ENCODE measurements at regions of chr15 and their contacts with region 1.

Region 1: GRCh38 chr15:78108299-78109084 is 16.1 kb downstream of the SH2D7 start:
- DNase-seq: peak; percentile 82 to 85 (median 82)
- H3K4me3 ChIP-seq: no peak overlapping the region
- H3K4me3 Mint-ChIP-seq: no peak overlapping the region
- H3K27ac ChIP-seq: no peak overlapping the region
- H3K27ac Mint-ChIP-seq: peak overlapping the region in 3 of 7 donors; percentile 24 to 62 (median 46)
- H3K4me1 ChIP-seq: peaks cover 34% of the 10 kb centered on the region
- H3K4me1 Mint-ChIP-seq: peaks cover 27 to 41% (median 31%) of the 10 kb centered on the region in 4 donors
- H3K27me3 ChIP-seq: no peaks in the 10 kb centered on the region
- H3K27me3 Mint-ChIP-seq: no peaks in the 10 kb centered on the region

Region 2: DNA sequence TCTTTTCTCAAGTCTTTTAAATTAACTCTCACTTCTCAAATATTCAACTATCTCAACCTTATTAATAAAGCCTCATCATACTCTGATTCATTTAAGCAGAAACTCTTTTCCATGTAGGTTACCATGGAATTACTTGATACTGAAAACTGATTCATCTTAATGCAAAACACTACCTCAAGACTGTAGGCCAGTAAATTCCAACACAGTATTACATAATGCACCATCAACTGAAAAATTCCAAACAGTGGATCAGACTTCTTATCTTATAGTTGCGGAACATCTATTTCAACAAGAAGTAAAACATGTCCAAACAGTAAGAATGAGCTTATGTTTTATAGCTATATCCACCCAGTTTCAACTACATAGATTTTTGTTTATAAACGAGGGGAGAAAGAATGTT is 813.0 kb before region 1 on chr15:
- CTCF ChIA-PET with region 1: no interaction called
- POLR2A ChIA-PET with region 1: no interaction called
- intact Hi-C with region 1: no loop called
- DNase-seq: no peak
- H3K4me3 ChIP-seq: no peak overlapping the region
- H3K4me3 Mint-ChIP-seq: no peak overlapping the region
- H3K27ac ChIP-seq: no peak overlapping the region
- H3K27ac Mint-ChIP-seq: no peak overlapping the region
- H3K4me1 ChIP-seq: no peaks in the 10 kb centered on the region
- H3K4me1 Mint-ChIP-seq: no peaks in the 10 kb centered on the region
- H3K27me3 ChIP-seq: no peaks in the 10 kb centered on the region
- H3K27me3 Mint-ChIP-seq: no peaks in the 10 kb centered on the region

Region 3: GRCh38 chr15:77959432-77959879 is 149.0 kb before region 1 on chr15:
- CTCF ChIA-PET with region 1: interaction called, 236 read pairs
- POLR2A ChIA-PET with region 1: interaction called, 8 read pairs
- intact Hi-C with region 1: loop called (anchors 1 kb)
- DNase-seq: peak; percentile 60 to 71 (median 67)
- H3K4me3 ChIP-seq: no peak overlapping the region
- H3K4me3 Mint-ChIP-seq: peak overlapping the region in 1 of 8 donors; percentile 56
- H3K27ac ChIP-seq: no peak overlapping the region
- H3K27ac Mint-ChIP-seq: no peak overlapping the region
- H3K4me1 ChIP-seq: no peaks in the 10 kb centered on the region
- H3K4me1 Mint-ChIP-seq: peaks cover 1 to 8% (median 6%) of the 10 kb centered on the region in 4 donors
- H3K27me3 ChIP-seq: no peaks in the 10 kb centered on the region
- H3K27me3 Mint-ChIP-seq: peaks cover 0 to 2% of the 10 kb centered on the region in 2 donors

Region 4: DNA sequence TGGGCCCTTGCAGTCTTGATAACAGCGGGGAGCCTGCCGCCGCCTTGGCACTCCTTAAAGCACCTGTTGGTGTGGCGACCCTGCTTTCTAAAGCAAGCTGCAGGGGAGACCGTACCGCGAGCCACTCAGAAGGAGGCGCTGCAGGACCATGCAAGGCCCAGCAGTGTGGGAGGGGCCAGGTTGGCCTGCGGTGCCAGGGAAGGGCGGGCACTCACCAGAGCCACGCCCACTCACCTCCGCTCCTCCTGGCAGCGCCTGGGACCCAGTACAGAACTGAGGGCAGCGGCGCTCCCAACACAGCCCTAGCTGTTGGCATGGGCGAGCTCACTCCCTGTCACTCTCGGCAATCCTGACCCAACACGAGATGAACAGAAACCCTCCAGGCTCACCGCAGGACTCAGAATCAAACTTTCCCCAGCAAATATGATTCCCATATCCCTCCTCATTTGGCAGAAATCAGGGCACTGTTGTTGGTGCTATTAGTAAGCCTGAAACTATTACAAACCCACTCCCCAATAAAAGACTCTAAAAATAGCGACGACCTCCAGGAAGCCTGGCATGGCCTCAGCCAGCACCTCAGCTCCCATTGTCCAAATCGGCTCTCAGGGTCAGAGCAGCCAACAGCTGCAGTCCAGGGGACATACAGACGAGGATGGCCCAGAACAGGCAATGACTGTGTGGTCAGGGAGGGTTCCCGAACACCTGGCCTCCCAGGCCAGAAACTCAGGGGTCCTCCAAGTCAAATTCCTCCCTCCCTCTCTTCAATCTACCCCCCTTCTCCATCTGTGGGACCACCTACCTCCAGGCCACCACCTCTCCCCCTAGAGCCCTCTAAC is 108.2 kb before region 1 on chr15:
- CTCF ChIA-PET with region 1: interaction called, 172 read pairs
- POLR2A ChIA-PET with region 1: interaction called, 21 read pairs
- intact Hi-C with region 1: loop called (anchors 1 kb)
- DNase-seq: peak; percentile 79 to 82 (median 80)
- H3K4me3 ChIP-seq: no peak overlapping the region
- H3K4me3 Mint-ChIP-seq: no peak overlapping the region
- H3K27ac ChIP-seq: no peak overlapping the region
- H3K27ac Mint-ChIP-seq: peak overlapping the region; percentile 49 to 93 (median 66)
- H3K4me1 ChIP-seq: no peaks in the 10 kb centered on the region
- H3K4me1 Mint-ChIP-seq: peaks cover 7 to 18% (median 10%) of the 10 kb centered on the region in 4 donors
- H3K27me3 ChIP-seq: no peaks in the 10 kb centered on the region
- H3K27me3 Mint-ChIP-seq: no peaks in the 10 kb centered on the region

Region 5: GRCh38 chr15:78049691-78050440 is 58.6 kb before region 1 on chr15:
- CTCF ChIA-PET with region 1: interaction called, 21 read pairs
- POLR2A ChIA-PET with region 1: interaction called, 7 read pairs
- intact Hi-C with region 1: no loop called
- DNase-seq: peak; percentile 54 to 72 (median 62)
- H3K4me3 ChIP-seq: peak overlapping the region in 1 of 2 donors; percentile 35
- H3K4me3 Mint-ChIP-seq: peak overlapping the region; percentile 63 to 86 (median 74)
- H3K27ac ChIP-seq: peak overlapping the region; percentile 68
- H3K27ac Mint-ChIP-seq: peak overlapping the region; percentile 86 to 98 (median 92)
- H3K4me1 ChIP-seq: peaks cover 100% of the 10 kb centered on the region
- H3K4me1 Mint-ChIP-seq: peaks cover 79 to 100% (median 92%) of the 10 kb centered on the region in 4 donors
- H3K27me3 ChIP-seq: no peaks in the 10 kb centered on the region
- H3K27me3 Mint-ChIP-seq: no peaks in the 10 kb centered on the region

Region 6: GRCh38 chr15:78077058-78077877 is 31.2 kb before region 1 on chr15 and contains the start of gene TBC1D2B:
- CTCF ChIA-PET with region 1: interaction called, 41 read pairs
- POLR2A ChIA-PET with region 1: interaction called, 5 read pairs
- intact Hi-C with region 1: loop called (anchors 1 kb)
- DNase-seq: peak; percentile 65 to 71 (median 68)
- H3K4me3 ChIP-seq: peak within 1 kb of the TSS; percentile 59 to 89
- H3K4me3 Mint-ChIP-seq: peak within 1 kb of the TSS; percentile 93 to 100 (median 99)
- H3K27ac ChIP-seq: peak within 1 kb of the TSS; percentile 83
- H3K27ac Mint-ChIP-seq: peak within 1 kb of the TSS; percentile 89 to 99 (median 97)
- H3K4me1 ChIP-seq: peaks cover 45% of the 10 kb centered on the region
- H3K4me1 Mint-ChIP-seq: peaks cover 31 to 61% (median 46%) of the 10 kb centered on the region in 4 donors
- H3K27me3 ChIP-seq: no peaks in the 10 kb centered on the region
- H3K27me3 Mint-ChIP-seq: no peaks in the 10 kb centered on the region
- total RNA-seq, gene TBC1D2B: 98.1 to 114 TPM

Region 7: GRCh38 chr15:78195735-78196201 is 87.3 kb after region 1 on chr15:
- CTCF ChIA-PET with region 1: interaction called, 219 read pairs
- POLR2A ChIA-PET with region 1: interaction called, 6 read pairs
- intact Hi-C with region 1: loop called (anchors 1 kb)
- DNase-seq: peak in 4 of 5 donors; percentile 33 to 56 (median 42)
- H3K4me3 ChIP-seq: no peak overlapping the region
- H3K4me3 Mint-ChIP-seq: no peak overlapping the region
- H3K27ac ChIP-seq: no peak overlapping the region
- H3K27ac Mint-ChIP-seq: peak overlapping the region in 1 of 7 donors; percentile 37
- H3K4me1 ChIP-seq: no peaks in the 10 kb centered on the region
- H3K4me1 Mint-ChIP-seq: no peaks in the 10 kb centered on the region
- H3K27me3 ChIP-seq: no peaks in the 10 kb centered on the region
- H3K27me3 Mint-ChIP-seq: no peaks in the 10 kb centered on the region

Region 8: GRCh38 chr15:78422571-78423340 is 314.3 kb after region 1 on chr15:
- CTCF ChIA-PET with region 1: no interaction called
- POLR2A ChIA-PET with region 1: no interaction called
- intact Hi-C with region 1: loop called (anchors 1 kb)
- DNase-seq: peak; percentile 54 to 62 (median 61)
- H3K4me3 ChIP-seq: no peak overlapping the region
- H3K4me3 Mint-ChIP-seq: peak overlapping the region in 1 of 8 donors; percentile 27
- H3K27ac ChIP-seq: no peak overlapping the region
- H3K27ac Mint-ChIP-seq: peak overlapping the region in 1 of 7 donors; percentile 3
- H3K4me1 ChIP-seq: peaks cover 17% of the 10 kb centered on the region
- H3K4me1 Mint-ChIP-seq: peaks cover 21 to 32% (median 22%) of the 10 kb centered on the region in 4 donors
- H3K27me3 ChIP-seq: no peaks in the 10 kb centered on the region
- H3K27me3 Mint-ChIP-seq: peaks cover 0 to 5% of the 10 kb centered on the region in 2 donors

Measured in CD4-positive, alpha-beta memory T cell (primary cell).